ENCODE measurements at regions of chr4 and their contacts with region 1.

Region 1: DNA sequence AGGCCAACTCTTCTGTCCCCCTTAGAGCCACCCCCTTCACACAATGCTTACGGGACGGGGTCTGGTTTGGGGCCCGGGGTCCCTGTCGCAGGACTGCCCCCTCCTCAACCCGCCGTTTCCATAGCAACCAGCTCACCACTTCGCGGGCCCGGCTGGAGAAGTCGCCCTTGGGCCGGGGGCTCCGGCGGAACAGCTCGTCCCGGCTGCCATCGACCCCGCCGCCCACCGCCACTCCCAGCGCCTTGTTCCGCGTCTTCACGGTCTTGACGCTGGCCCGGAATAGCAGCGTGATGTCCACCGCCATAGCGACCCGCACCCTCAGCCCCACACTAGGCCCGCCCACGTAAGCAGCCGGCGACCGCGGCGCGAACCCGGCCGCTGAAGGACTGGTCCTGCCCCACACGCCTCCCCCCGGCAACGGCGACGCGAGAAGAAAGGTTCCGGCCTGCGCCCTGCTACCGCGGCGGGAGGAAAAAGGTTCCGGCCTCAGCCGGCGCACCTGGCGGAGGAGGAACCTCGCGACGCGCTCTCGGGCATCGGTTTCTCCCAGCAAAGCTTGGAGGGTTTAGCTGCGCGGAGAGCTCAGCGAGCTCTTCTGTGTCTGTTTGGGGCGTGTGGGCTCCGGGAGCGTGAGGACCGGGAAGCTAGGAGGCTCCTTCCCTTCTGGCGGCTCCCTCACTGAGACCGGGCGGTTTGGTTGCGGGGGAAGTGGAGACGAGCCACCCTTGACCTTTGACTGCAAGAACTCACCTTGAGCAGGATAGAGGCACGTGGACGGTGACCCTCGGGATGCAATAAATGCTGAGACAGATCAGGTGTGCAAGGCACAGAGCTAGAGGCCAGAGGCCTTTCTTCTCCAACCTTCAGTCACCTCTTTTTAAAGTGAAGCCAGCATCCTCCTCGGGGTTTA is at the start of gene STX18:
- DNase-seq: peak; percentile 70 to 89 (median 85)
- ATAC-seq: peak; percentile 92
- H3K4me3 Mint-ChIP-seq: peak within 1 kb of the TSS; percentile 94 to 99 (median 98)
- H3K27ac Mint-ChIP-seq: peak within 1 kb of the TSS; percentile 92 to 99 (median 96)
- H3K4me1 Mint-ChIP-seq: peaks cover 29 to 59% (median 55%) of the 10 kb centered on the region in 4 donors
- H3K27me3 Mint-ChIP-seq: no peaks in the 10 kb centered on the region
- polyA plus RNA-seq, gene STX18: 20.0 to 21.5 (median 20.2) TPM

Region 2: DNA sequence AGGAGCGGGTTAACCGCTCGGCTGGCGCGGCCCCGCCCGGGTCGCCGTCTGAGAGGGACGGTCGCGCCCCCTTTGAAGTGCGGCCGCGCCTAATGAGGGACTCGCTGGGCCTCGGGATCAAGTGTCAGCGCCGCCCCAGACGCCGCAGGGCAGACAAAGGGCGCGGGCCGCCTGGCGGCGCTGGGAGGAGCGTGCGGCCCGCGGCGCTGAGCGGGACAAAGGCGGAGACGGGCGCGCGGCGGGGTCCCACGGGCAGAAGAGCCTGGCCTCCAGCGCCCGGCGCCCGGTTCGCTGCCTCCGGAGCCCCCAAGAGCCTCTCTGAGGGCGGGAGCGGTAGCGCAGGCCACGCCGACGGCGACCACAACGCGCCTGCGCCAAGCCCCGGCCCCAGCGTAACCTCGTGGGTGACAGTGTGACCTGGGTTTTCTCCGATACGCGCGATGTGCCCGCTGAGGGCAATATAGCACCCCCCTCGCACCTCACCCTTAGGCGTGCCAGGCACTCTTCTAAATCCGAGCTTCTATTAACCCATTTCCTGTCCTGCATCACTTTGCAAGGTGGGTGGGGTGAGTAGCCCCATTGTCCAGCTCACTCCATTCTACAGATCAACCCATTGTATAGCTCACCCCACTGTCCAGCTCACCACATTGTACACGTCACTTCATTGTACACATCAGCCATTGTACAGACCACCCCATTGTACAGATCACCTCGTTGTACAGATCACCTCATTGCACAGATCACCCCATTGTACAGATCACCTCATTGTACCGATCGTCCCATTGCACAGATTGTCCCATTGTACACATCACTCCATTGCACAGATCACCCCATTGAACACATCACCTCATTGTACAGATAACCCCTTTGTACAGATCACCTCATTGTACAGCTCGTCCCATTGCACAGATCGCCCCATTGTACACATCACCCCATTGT is 33.6 kb after region 1 on chr4:
- POLR2A ChIA-PET with region 1: interaction called, 26 read pairs
- DNase-seq: peak; percentile 39 to 82 (median 62)
- ATAC-seq: peak; percentile 88 to 90
- H3K4me3 Mint-ChIP-seq: peak overlapping the region; percentile 78 to 91 (median 86)
- H3K27ac Mint-ChIP-seq: peak overlapping the region in 8 of 10 donors; percentile 0 to 91 (median 52)
- H3K4me1 Mint-ChIP-seq: peaks cover 7 to 21% (median 18%) of the 10 kb centered on the region in 4 donors
- H3K27me3 Mint-ChIP-seq: peaks cover 0 to 5% (median 0%) of the 10 kb centered on the region in 5 donors

Measured in naive thymus-derived CD8-positive, alpha-beta T cell (primary cell).